ENCODE measurements at regions of chr13 and their contacts with region 1.

Region 1: DNA sequence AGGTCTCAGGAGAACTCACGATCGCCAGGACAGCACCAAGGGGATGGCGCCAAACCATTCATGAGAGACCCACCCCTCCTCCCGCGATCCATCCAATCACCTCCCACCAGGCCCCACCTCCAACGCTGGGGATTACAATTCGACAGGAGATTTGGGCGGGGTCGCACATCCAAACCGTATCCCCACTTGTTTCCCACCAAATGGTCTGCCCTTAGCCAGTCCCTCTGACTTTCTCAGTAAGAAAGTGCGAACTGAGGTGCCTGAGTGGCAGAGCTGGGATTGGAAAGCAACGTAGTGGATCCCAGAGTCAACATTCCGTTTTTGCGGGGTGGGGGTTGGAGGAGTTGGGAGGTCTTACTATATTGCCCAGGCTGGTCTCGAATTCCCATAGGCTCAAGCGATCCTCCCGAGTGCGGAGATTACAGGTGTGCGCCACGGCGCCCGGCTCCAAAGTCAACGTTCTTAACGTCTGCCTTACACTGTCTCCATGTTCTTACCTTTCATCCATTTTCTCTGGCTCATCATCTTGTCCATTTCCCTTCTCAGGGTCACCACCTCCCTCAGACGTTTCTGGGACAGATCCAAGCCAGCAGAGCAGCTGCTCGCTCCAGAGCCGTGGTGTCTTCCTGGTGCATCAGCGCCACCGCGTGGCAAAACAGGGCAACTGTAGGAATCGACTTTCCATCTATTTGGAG is 102.7 kb upstream of the ABCC4 start:
- DNase-seq: peak; percentile 80
- H3K27ac ChIP-seq: no peak overlapping the region
- CTCF ChIP-seq: peak; percentile 92

Region 2: GRCh38 chr13:95191821-95192563 is 212.0 kb before region 1 on chr13:
- CTCF ChIA-PET with region 1: interaction called, 24 read pairs
- POLR2A ChIA-PET with region 1: no interaction called
- DNase-seq: peak; percentile 55
- H3K27ac ChIP-seq: no peak overlapping the region
- CTCF ChIP-seq: peak; percentile 82

Region 3: GRCh38 chr13:95315752-95316151 is 88.2 kb before region 1 on chr13:
- CTCF ChIA-PET with region 1: interaction called, 11 read pairs
- POLR2A ChIA-PET with region 1: no interaction called
- DNase-seq: no peak
- H3K27ac ChIP-seq: no peak overlapping the region
- CTCF ChIP-seq: no peak

Region 4: DNA sequence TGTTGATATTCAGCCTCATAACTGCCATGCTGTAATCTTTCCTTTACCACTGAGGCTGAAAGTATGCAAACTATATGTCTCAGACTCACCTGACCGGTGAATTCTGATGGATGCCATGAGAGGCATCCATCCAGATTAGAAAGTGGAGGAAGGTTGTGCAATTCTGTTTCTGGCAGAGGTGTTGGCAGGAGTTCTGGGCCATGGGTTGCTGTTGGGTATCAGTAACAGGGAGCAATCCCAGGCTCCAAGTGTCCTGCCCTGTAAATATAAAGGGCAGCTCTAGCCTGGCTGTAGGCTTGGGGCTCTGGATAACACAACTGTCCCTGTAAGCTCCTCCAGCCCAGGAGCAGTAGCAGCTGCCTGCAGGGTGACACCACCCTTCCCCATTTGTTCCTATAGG is 25.4 kb before region 1 on chr13:
- CTCF ChIA-PET with region 1: interaction called, 10 read pairs
- POLR2A ChIA-PET with region 1: no interaction called
- DNase-seq: no peak
- H3K27ac ChIP-seq: no peak overlapping the region
- CTCF ChIP-seq: no peak

Region 5: GRCh38 chr13:95614641-95615245 is 210.8 kb after region 1 on chr13:
- CTCF ChIA-PET with region 1: no interaction called
- POLR2A ChIA-PET with region 1: no interaction called
- DNase-seq: no peak
- H3K27ac ChIP-seq: no peak overlapping the region
- CTCF ChIP-seq: no peak

Region 6: GRCh38 chr13:95671597-95671996 is 267.6 kb after region 1 on chr13:
- CTCF ChIA-PET with region 1: no interaction called
- POLR2A ChIA-PET with region 1: no interaction called
- DNase-seq: no peak
- H3K27ac ChIP-seq: no peak overlapping the region
- CTCF ChIP-seq: no peak

Region 7: GRCh38 chr13:95906999-95907398 is 503.0 kb after region 1 on chr13:
- CTCF ChIA-PET with region 1: no interaction called
- POLR2A ChIA-PET with region 1: no interaction called
- DNase-seq: no peak
- H3K27ac ChIP-seq: no peak overlapping the region
- CTCF ChIP-seq: no peak